Naive thymus-derived CD8-positive, alpha-beta T cell (primary cell): ENCODE measurements at regions of chr17 and their contacts with region 1.

Region 1: GRCh38 chr17:82092094-82092994 is 5.7 kb downstream of the FASN start:
- DNase-seq: peak in 1 of 10 donors; percentile 6
- ATAC-seq: no peak
- H3K4me3 Mint-ChIP-seq: no peak overlapping the region
- H3K27ac Mint-ChIP-seq: peak overlapping the region in 1 of 10 donors; percentile 33
- H3K4me1 Mint-ChIP-seq: peaks cover 0 to 9% (median 4%) of the 10 kb centered on the region in 4 donors
- H3K27me3 Mint-ChIP-seq: no peaks in the 10 kb centered on the region

Region 2: DNA sequence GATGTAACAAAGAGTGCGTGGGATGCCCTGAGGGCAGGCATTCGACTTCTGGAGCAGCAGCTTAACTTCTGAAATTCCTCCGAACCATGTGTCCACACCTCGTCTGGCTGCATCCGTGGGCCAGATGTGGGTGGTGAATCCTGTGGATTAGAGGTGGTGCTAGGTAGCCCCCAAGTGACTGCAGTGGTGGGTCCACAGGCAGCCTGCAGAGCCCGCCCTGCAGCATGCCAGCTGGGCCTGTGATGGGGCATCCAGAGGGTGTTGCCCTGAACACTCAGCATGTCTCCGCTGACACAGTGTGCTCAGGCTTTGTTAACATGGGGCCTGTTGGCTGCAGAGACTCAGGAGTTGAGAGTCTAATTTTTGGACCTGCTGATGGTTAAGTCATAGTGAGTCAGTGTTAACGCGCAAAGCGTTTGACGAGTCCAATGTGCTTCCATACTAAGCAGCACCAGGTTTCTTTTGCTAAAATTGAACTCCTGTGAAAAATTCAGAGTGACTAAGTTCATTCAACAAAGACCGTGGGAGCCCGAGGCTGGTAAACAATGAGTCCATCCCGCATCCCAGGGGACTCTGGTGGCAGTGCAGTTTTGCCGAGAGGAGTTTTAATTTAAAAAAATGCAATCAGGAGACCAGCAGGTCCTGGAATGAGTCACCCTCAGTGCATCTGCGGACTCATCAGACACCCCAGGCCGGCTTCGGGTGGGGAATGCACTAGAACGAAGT is 194.0 kb before region 1 on chr17:
- POLR2A ChIA-PET with region 1: interaction called, 10 read pairs
- DNase-seq: no peak
- ATAC-seq: no peak
- H3K4me3 Mint-ChIP-seq: no peak overlapping the region
- H3K27ac Mint-ChIP-seq: no peak overlapping the region
- H3K4me1 Mint-ChIP-seq: peaks cover 2 to 10% (median 9%) of the 10 kb centered on the region in 4 donors
- H3K27me3 Mint-ChIP-seq: peaks cover 5 to 13% (median 10%) of the 10 kb centered on the region in 5 donors